B cell (primary cell): ENCODE measurements at regions of chr16 and their contacts with region 1.

Region 1: GRCh38 chr16:30526823-30527635 is 663 bp upstream of the ZNF768 start:
- DNase-seq: peak; percentile 94
- ATAC-seq: peak; percentile 82
- H3K4me3 ChIP-seq: peak overlapping the region; percentile 59 to 97 (median 82)
- H3K4me3 Mint-ChIP-seq: peak overlapping the region; percentile 88
- H3K27ac ChIP-seq: peak overlapping the region; percentile 87 to 89
- H3K27ac Mint-ChIP-seq: peak overlapping the region; percentile 96
- H3K4me1 ChIP-seq: peaks cover 13 to 30% of the 10 kb centered on the region in 2 donors
- H3K4me1 Mint-ChIP-seq: peaks cover 20% of the 10 kb centered on the region
- H3K27me3 ChIP-seq: no peaks in the 10 kb centered on the region
- H3K27me3 Mint-ChIP-seq: no peaks in the 10 kb centered on the region
- CTCF ChIP-seq: peak; percentile 6

Region 2: DNA sequence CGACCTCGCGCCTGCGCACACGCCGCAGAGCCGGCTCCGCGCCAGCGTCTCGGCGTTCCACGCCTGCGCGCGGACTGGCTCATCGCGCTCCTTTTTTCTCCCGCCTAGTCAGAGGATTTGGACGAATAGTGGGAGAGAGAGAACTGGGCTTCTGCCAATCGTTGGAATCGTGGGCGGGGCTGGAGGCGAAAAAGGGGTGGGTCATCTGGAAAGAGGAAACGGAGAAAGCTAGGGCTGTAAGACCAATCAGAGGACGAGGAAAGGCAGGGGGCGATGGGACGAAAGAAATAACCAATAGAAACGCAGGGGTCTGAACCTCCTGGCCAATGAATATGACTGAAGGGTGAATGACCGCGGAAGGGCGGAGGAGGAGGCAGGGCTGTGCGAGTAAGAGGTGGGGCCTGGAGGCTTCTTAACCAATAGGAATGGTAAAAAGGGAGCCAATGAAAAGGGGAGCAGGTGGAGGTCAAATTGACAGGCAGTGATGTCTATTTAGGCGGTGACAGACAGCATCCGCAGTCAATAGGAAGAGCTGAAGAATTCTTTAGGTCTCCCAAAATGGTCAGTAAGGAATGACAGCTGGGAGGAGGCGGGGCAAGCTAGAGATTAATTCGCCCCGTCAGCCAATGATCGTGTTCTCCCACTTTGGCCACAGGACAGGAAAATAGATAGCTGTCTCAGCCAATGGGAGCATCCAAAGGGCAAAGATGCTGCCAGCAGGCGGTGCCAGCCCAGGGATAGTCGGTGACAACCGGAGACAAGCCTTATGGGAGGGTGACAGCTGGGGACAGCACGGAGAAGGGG is 156.4 kb before region 1 on chr16 and contains the start of gene TBC1D10B:
- CTCF ChIA-PET with region 1: no interaction called
- POLR2A ChIA-PET with region 1: no interaction called
- intact Hi-C with region 1: loop called (anchors 1 kb)
- DNase-seq: peak; percentile 99
- ATAC-seq: peak; percentile 82
- H3K4me3 ChIP-seq: peak within 1 kb of the TSS; percentile 47 to 77 (median 70)
- H3K4me3 Mint-ChIP-seq: peak within 1 kb of the TSS; percentile 86
- H3K27ac ChIP-seq: peak within 1 kb of the TSS; percentile 60 to 71
- H3K27ac Mint-ChIP-seq: peak within 1 kb of the TSS; percentile 90
- H3K4me1 ChIP-seq: peaks cover 25 to 35% of the 10 kb centered on the region in 2 donors
- H3K4me1 Mint-ChIP-seq: peaks cover 49% of the 10 kb centered on the region
- H3K27me3 ChIP-seq: no peaks in the 10 kb centered on the region
- H3K27me3 Mint-ChIP-seq: no peaks in the 10 kb centered on the region
- CTCF ChIP-seq: peak; percentile 26
- total RNA-seq, gene TBC1D10B: 53.0 and 58.0 TPM in 2 replicates

Region 3: DNA sequence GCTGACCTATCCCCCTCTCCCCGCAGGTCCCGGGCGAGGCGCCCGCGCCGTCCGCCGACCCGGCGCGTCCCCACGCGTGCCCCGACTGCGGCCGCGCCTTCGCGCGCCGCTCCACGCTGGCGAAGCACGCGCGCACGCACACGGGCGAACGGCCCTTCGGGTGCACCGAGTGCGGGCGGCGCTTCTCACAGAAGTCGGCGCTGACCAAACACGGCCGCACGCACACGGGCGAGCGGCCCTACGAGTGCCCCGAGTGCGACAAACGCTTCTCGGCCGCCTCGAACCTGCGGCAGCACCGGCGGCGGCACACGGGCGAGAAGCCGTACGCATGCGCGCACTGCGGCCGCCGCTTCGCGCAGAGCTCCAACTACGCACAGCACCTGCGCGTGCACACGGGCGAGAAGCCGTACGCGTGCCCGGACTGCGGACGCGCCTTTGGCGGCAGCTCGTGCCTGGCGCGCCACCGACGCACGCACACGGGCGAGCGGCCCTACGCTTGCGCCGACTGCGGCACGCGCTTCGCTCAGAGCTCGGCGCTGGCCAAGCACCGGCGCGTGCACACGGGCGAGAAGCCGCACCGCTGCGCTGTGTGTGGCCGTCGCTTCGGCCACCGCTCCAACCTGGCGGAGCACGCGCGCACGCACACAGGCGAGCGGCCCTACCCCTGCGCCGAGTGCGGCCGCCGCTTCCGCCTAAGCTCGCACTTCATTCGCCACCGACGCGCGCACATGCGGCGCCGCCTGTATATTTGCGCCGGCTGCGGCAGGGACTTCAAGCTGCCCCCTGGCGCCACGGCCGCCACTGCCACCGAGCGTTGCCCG is 109.3 kb before region 1 on chr16:
- CTCF ChIA-PET with region 1: no interaction called
- POLR2A ChIA-PET with region 1: interaction called, 6 read pairs
- intact Hi-C with region 1: loop called (anchors 5 kb)
- DNase-seq: peak; percentile 95
- ATAC-seq: peak; percentile 87
- H3K4me3 ChIP-seq: peak overlapping the region; percentile 33 to 75 (median 66)
- H3K4me3 Mint-ChIP-seq: peak overlapping the region; percentile 77
- H3K27ac ChIP-seq: peak overlapping the region; percentile 47 to 73
- H3K27ac Mint-ChIP-seq: peak overlapping the region; percentile 72
- H3K4me1 ChIP-seq: peaks cover 5 to 12% of the 10 kb centered on the region in 2 donors
- H3K4me1 Mint-ChIP-seq: peaks cover 7% of the 10 kb centered on the region
- H3K27me3 ChIP-seq: no peaks in the 10 kb centered on the region
- H3K27me3 Mint-ChIP-seq: no peaks in the 10 kb centered on the region
- CTCF ChIP-seq: peak; percentile 17

Region 4: GRCh38 chr16:30445408-30446202 is 81.4 kb before region 1 on chr16 and contains the start of gene SEPHS2:
- CTCF ChIA-PET with region 1: interaction called, 4 read pairs
- POLR2A ChIA-PET with region 1: interaction called, 5 read pairs
- intact Hi-C with region 1: loop called (anchors 1 kb)
- DNase-seq: peak; percentile 96
- ATAC-seq: peak; percentile 96
- H3K4me3 ChIP-seq: peak within 1 kb of the TSS; percentile 74 to 99 (median 78)
- H3K4me3 Mint-ChIP-seq: peak within 1 kb of the TSS; percentile 96
- H3K27ac ChIP-seq: peak within 1 kb of the TSS; percentile 78 to 85
- H3K27ac Mint-ChIP-seq: peak within 1 kb of the TSS; percentile 97
- H3K4me1 ChIP-seq: peaks cover 29 to 36% of the 10 kb centered on the region in 2 donors
- H3K4me1 Mint-ChIP-seq: peaks cover 42% of the 10 kb centered on the region
- H3K27me3 ChIP-seq: no peaks in the 10 kb centered on the region
- H3K27me3 Mint-ChIP-seq: no peaks in the 10 kb centered on the region
- CTCF ChIP-seq: peak; percentile 47
- total RNA-seq, gene SEPHS2: 62.2 and 63.2 TPM in 2 replicates

Region 5: GRCh38 chr16:30472328-30472942 is 54.6 kb before region 1 on chr16 and contains the start of gene ITGAL:
- CTCF ChIA-PET with region 1: interaction called, 3 read pairs
- POLR2A ChIA-PET with region 1: interaction called, 4 read pairs
- intact Hi-C with region 1: loop called (anchors 2 kb)
- DNase-seq: peak; percentile 83
- ATAC-seq: peak; percentile 69
- H3K4me3 ChIP-seq: peak within 1 kb of the TSS; percentile 39 to 76 (median 59)
- H3K4me3 Mint-ChIP-seq: peak within 1 kb of the TSS; percentile 83
- H3K27ac ChIP-seq: peak within 1 kb of the TSS; percentile 70 to 82
- H3K27ac Mint-ChIP-seq: peak within 1 kb of the TSS; percentile 91
- H3K4me1 ChIP-seq: peaks cover 42 to 48% of the 10 kb centered on the region in 2 donors
- H3K4me1 Mint-ChIP-seq: peaks cover 47% of the 10 kb centered on the region
- H3K27me3 ChIP-seq: no peaks in the 10 kb centered on the region
- H3K27me3 Mint-ChIP-seq: no peaks in the 10 kb centered on the region
- CTCF ChIP-seq: no peak
- total RNA-seq, gene ITGAL: 176 and 184 TPM in 2 replicates

Region 6: DNA sequence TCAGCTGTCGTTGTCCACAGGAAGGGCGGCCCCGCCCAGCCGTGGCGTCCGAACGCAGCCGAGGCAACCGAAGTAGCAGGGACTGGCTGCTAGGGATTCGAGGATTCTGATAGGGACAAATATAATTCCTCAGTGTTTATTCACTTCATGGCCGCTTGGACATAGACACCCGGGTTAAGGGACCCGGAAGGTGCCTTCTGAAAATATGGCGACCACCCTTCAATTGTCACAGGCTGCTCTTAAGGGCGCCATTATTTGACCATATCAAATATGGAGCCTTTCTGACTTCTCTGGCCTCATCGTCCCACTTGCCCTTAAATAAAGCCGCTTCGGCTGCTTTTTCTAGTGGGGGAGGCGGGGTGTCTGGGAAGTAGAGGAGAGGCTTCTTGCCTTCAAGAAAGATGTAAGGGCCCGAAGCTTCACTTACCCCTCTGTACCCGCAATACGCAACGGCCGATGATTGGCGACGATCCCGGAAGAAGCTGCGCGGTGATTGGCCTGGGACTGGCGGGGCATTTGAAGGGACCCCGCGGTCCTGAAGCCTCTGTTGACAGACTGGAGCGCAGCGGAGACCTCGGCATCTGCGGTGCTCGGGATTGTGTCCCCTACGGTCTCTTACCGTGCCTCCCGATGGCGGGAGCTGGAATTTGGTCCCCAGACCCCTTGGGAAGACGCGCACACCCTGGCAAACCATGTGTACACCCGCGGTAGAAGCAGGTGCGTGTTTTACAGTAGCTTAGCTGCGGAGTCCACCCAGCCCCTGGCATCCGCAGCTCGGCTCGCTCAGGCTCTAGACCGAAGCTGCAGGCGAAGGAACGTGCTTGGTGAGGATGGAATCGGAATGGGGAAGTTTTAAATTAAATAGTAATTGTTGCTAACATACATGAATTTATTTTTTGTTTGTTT is 44.9 kb after region 1 on chr16 and contains the start of gene ZNF688:
- CTCF ChIA-PET with region 1: interaction called, 4 read pairs
- POLR2A ChIA-PET with region 1: interaction called, 6 read pairs
- intact Hi-C with region 1: loop called (anchors 1 kb)
- DNase-seq: peak; percentile 97
- ATAC-seq: peak; percentile 86
- H3K4me3 ChIP-seq: peak within 1 kb of the TSS; percentile 72 to 89 (median 86)
- H3K4me3 Mint-ChIP-seq: peak within 1 kb of the TSS; percentile 91
- H3K27ac ChIP-seq: peak within 1 kb of the TSS; percentile 96 to 97
- H3K27ac Mint-ChIP-seq: peak within 1 kb of the TSS; percentile 99
- H3K4me1 ChIP-seq: peaks cover 29 to 43% of the 10 kb centered on the region in 2 donors
- H3K4me1 Mint-ChIP-seq: peaks cover 40% of the 10 kb centered on the region
- H3K27me3 ChIP-seq: no peaks in the 10 kb centered on the region
- H3K27me3 Mint-ChIP-seq: no peaks in the 10 kb centered on the region
- CTCF ChIP-seq: no peak
- total RNA-seq, gene ZNF688: 23.1 and 24.9 TPM in 2 replicates

Region 7: GRCh38 chr16:30609926-30610839 is 83.2 kb after region 1 on chr16 and contains the start of gene ZNF689:
- CTCF ChIA-PET with region 1: no interaction called
- POLR2A ChIA-PET with region 1: interaction called, 4 read pairs
- intact Hi-C with region 1: loop called (anchors 1 kb)
- DNase-seq: peak; percentile 97
- ATAC-seq: peak; percentile 88
- H3K4me3 ChIP-seq: peak within 1 kb of the TSS; percentile 84 to 98 (median 91)
- H3K4me3 Mint-ChIP-seq: peak within 1 kb of the TSS; percentile 98
- H3K27ac ChIP-seq: peak within 1 kb of the TSS; percentile 82 to 96
- H3K27ac Mint-ChIP-seq: peak within 1 kb of the TSS; percentile 96
- H3K4me1 ChIP-seq: peaks cover 14 to 24% of the 10 kb centered on the region in 2 donors
- H3K4me1 Mint-ChIP-seq: peaks cover 21% of the 10 kb centered on the region
- H3K27me3 ChIP-seq: no peaks in the 10 kb centered on the region
- H3K27me3 Mint-ChIP-seq: no peaks in the 10 kb centered on the region
- CTCF ChIP-seq: no peak
- total RNA-seq, gene ZNF689: 11.9 and 12.4 TPM in 2 replicates